Sciatic nerve (tissue), 2 donors: ENCODE measurements at regions of chr17 and their contacts with region 1.

Region 1: GRCh38 chr17:63434876-63435684 is 11.0 kb downstream of the CYB561 start:
- DNase-seq: peak; percentile 86
- ATAC-seq: no peak

Region 2: DNA sequence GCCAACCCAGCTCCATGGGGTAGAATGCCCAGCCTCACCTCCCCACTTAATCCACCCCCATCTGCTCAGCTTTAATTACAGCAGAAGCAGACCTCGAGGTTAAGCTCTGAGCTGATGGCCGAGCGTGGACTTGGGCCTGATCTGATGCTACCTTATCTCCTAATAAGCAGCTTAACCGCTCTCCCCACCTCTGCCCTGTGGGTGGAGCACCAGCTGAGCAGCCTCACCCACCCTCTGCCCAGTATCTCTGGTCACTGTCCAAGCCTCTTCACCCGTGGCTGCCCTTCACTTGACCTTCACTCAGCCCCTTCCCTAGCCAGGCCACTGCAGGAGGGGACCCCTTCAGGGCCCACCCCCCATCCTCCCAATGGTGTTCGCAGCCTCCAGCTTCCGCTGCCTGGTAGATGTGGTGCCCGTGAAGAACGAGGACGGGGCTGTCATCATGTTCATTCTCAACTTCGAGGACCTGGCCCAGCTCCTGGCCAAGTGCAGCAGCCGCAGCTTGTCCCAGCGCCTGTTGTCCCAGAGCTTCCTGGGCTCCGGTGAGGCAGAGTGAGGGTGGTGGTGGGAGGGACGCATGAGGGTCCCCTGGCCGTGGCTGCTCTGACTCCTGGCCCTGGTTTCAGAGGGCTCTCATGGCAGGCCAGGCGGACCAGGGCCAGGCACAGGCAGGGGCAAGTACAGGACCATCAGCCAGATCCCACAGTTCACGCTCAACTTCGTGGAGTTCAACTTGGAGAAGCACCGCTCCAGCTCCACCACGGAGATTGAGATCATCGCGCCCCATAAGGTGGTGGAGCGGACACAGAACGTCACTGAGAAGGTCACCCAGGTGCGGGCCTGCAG is 94.9 kb after region 1 on chr17:
- intact Hi-C with region 1: no loop called
- DNase-seq: no peak
- ATAC-seq: no peak

Region 3: GRCh38 chr17:63611354-63611753 is 176.3 kb after region 1 on chr17:
- intact Hi-C with region 1: loop called (anchors 5 kb)
- DNase-seq: no peak
- ATAC-seq: no peak

Region 4: GRCh38 chr17:64385187-64386083 is 950.4 kb after region 1 on chr17:
- intact Hi-C with region 1: no loop called
- DNase-seq: peak; percentile 78
- ATAC-seq: peak; percentile 85